ENCODE measurements at regions of chr19 and their contacts with region 1.

Region 1: DNA sequence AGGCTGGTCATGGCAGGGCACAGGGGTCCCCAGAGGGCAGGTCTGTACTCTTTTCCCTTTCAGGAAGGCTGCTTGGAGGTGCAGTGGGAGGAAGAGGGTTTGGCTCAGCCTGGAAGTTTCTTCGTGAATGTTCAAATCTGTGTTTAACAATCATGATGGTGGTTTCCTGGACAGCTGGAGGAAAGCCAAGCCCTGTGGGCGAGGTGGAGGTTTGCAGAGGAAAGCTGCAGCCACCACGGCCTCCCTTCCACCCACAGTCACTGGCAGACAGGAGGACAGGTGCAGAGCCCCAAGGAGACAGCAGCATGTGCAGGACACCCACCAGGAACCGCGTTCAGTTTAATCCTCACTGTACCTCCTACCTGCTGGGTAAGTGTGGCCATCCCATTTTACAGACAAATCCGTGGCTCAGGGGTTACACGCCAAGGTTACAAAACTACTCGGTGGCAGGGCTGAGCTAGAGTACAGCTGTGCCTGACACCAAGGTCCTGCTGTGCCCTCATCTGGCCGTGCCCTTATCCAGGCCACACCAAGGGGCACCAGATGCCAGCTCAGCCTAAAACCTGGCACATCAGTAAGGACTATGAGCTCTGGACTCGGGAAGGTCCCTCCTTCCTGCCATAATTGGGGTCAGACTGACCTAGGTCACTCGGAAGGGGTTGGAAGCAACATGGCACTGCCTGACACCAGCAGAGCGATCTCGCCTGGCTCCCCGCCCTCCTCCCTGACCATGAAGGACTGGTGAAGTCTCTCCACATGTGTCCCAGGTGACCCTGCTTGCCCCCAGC is 34.1 kb downstream of the SUGP2 start:
- DNase-seq: no peak
- ATAC-seq: peak in 2 of 4 experiments; percentile 20 to 23
- H3K4me3 ChIP-seq: no peak overlapping the region
- H3K4me3 Mint-ChIP-seq: peak overlapping the region in 1 of 3 donors; percentile 15
- H3K27ac ChIP-seq: no peak overlapping the region
- H3K27ac Mint-ChIP-seq: peak overlapping the region; percentile 52 to 55
- H3K4me1 ChIP-seq: peaks cover 0 to 19% of the 10 kb centered on the region in 2 experiments
- H3K4me1 Mint-ChIP-seq: peaks cover 22 to 27% (median 25%) of the 10 kb centered on the region in 3 donors
- H3K27me3 ChIP-seq: no peaks in the 10 kb centered on the region
- H3K27me3 Mint-ChIP-seq: no peaks in the 10 kb centered on the region

Region 2: DNA sequence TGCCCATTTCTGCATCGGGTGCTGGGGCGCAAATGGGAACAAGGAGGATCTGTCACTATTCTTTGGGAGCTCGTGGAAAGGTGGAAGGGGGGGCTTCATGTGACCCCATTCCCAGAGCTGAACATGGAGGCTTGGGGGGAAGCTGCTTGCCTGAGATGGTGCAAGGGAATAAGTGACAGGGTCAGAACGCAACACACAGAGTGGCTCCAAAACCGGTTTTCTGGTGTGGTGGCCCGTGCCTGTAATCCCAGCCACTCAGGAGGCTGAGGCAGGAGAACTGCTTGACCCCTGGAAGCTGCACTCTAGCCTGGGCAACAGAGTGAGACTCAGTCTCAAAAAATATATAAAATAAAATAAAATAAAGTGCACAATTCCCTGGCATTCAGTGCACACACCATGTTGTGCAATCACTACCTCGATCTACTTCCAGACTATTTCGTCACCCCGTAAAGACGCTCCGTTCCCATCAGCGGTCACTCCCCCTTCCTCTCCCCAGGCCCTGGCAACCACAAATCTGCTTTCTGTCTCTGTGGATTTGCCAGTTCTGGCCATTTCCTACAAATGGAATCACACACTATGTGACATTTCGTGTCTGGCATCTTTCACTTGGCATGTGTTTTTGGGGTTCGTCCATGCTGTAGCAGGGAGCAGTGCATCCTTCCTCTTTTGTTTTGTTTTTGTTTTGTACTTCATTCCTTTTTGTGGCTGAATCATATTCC is 189.9 kb before region 1 on chr19:
- CTCF ChIA-PET with region 1: interaction called in 1 of 2 experiments, 11 read pairs
- POLR2A ChIA-PET with region 1: no interaction called
- DNase-seq: no peak
- ATAC-seq: no peak
- H3K4me3 ChIP-seq: no peak overlapping the region
- H3K4me3 Mint-ChIP-seq: no peak overlapping the region
- H3K27ac ChIP-seq: no peak overlapping the region
- H3K27ac Mint-ChIP-seq: no peak overlapping the region
- H3K4me1 ChIP-seq: no peaks in the 10 kb centered on the region
- H3K4me1 Mint-ChIP-seq: peaks cover 0 to 3% (median 3%) of the 10 kb centered on the region in 3 donors
- H3K27me3 ChIP-seq: peaks cover 0 to 45% of the 10 kb centered on the region in 2 experiments
- H3K27me3 Mint-ChIP-seq: peaks cover 8 to 12% of the 10 kb centered on the region in 2 donors

Measured in T-cell (primary cell).